ENCODE measurements at regions of chr1 and their contacts with region 1.

Region 1: DNA sequence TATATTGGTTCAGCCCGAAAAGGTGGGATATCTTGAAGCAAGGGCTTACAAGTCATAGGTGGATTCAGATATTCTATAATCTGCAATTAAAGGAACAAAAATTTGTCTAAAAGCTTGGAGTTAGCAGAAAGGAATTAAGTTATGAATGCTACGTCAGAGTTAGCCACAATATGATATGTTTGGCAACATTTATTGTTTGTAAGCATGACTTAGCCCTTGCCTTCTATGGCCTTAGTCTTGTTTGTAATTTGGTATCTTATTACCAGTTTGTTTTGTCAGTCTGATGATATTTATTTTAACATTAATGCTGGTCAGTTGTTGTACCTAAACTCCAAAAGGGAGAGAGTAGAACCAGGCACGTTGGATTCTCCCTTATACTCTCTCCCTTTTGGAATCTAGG is 43.1 kb upstream of the SUCO start:
- H3K4me3 Mint-ChIP-seq: no peak overlapping the region
- H3K27ac Mint-ChIP-seq: no peak overlapping the region
- H3K4me1 Mint-ChIP-seq: peaks cover 23% of the 10 kb centered on the region
- H3K27me3 Mint-ChIP-seq: no peaks in the 10 kb centered on the region

Region 2: DNA sequence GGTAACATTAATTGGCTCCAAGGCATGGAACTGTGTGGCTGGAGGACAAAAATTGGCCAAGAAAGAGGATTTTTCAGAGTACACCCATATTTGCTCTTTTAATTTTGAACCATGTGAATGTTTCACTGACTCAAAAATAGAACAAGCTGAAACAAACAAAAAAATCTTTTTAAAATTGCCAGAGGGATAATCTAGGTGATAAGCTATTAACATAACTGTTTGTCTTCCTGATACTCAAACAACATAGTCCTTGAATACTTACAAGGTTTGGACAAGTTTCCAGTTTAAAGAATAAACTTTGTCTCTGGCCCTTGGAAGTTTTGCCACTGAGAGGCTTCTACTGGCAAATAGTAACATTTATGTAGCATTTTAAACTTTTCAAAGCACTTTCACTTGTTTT is 16.0 kb before region 1 on chr1:
- intact Hi-C with region 1: loop called (anchors 2 kb)
- H3K4me3 Mint-ChIP-seq: no peak overlapping the region
- H3K27ac Mint-ChIP-seq: no peak overlapping the region
- H3K4me1 Mint-ChIP-seq: peaks cover 32% of the 10 kb centered on the region
- H3K27me3 Mint-ChIP-seq: no peaks in the 10 kb centered on the region

Measured in dendritic cell treated with granulocyte-macrophage colony-stimulating factor and Interleukin-4, amounts not matched to agents 40 ng/mL and 50 ng/mL, for 4 days (primary cell).